Cardiac septum (tissue), 1 donor: ENCODE measurements at regions of chrX and their contacts with region 1.

Region 1: DNA sequence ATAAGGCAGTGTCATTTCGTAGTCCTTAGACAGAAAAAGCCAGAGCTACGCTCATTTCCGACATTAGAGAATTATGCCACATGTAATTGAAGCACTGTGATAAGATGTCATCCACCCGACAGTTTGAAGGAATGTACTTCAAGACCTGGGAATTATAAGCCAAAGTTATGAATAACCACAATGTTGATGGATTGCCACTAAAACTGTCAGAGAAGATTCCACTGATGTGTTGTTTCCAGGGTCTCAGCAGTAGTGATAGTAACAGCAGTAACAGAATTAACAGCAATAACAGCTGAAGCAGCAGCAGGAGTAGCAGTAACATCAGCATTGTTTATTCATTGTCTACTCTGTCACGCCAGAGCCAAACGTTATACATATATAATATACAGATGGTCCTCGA is 24.7 kb downstream of the RAB33A start:
- DNase-seq: no peak

Region 2: DNA sequence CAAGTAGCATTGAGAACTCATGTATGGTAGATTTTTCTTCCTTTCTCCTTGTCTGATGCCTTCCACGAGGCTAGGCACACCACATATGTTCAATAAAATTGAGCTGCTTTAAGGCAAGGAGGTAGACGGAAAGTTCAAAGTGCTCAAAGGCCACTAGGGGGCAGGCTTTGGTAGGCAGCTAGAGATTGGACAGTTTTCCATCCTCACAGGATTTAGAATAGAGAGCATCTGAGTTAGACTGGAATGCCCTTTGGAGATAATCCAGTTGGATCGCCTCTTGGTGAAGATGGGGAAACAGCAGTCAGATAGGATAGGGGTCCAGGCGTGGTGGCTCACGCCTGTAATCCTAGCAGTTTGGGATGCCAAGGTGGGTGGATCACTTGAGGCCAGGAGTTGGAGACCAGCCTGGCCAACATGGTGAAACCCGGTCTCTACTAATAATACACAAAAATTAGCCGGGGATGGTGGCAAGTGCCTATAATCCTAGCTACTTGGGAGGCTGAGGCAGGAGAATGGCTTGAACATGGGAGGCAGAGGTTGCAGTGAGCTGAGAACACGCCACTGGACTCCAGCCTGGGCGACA is 116.6 kb before region 1 on chrX:
- intact Hi-C with region 1: loop called (anchors 1 kb)
- DNase-seq: no peak